ENCODE measurements at regions of chr3 and their contacts with region 1.

Region 1: DNA sequence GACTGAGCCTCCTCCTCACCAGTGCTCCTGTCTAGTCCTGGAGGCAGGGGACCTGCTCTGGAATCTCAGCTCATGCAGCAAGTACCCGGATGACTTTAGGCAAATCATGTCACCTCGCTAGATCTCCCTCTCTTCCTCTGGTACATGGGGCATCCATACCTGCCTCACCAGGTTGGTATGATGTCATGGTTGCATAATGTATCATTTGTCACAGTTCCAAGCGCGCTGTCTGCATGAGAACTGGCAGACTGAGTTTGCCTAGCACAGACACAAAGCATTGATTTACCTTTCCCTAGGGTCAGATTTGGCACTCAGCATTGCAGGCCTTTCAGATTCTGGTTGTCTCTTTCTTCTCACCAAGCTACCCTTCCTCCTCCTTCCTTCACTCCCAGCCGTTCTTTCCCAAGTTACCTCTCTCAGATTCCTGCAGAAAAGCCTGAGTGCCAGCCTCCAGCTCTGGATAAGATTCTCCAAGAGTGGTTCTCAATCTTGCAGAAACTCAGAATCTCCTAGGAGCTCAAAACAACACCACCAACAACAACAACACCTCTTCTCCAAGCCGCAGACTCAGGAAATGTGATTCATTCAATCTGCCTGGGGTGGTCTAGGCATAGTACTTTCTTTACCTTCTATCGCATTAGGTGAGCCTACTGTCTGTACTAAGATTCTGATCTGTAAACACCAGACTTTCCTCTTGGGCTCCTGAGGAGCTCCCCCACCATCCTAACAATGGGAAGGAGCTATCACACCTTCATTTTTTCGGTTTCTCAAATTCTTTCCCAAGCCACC is 29.5 kb downstream of the FAM43A start:
- DNase-seq: no peak
- H3K4me3 ChIP-seq: no peak overlapping the region
- H3K4me3 Mint-ChIP-seq: no peak overlapping the region
- H3K27ac ChIP-seq: no peak overlapping the region
- H3K27ac Mint-ChIP-seq: peak overlapping the region in 2 of 7 donors; percentile 1 to 70
- H3K4me1 ChIP-seq: no peaks in the 10 kb centered on the region
- H3K4me1 Mint-ChIP-seq: peaks cover 2% of the 10 kb centered on the region
- H3K27me3 ChIP-seq: no peaks in the 10 kb centered on the region
- H3K27me3 Mint-ChIP-seq: peaks cover 0 to 6% (median 0%) of the 10 kb centered on the region in 3 donors
- CTCF ChIP-seq: no peak

Region 2: GRCh38 chr3:194604834-194605233 is 110.4 kb before region 1 on chr3:
- intact Hi-C with region 1: no loop called
- DNase-seq: no peak
- H3K4me3 ChIP-seq: no peak overlapping the region
- H3K4me3 Mint-ChIP-seq: no peak overlapping the region
- H3K27ac ChIP-seq: no peak overlapping the region
- H3K27ac Mint-ChIP-seq: no peak overlapping the region
- H3K4me1 ChIP-seq: no peaks in the 10 kb centered on the region
- H3K4me1 Mint-ChIP-seq: no peaks in the 10 kb centered on the region
- H3K27me3 ChIP-seq: no peaks in the 10 kb centered on the region
- H3K27me3 Mint-ChIP-seq: no peaks in the 10 kb centered on the region
- CTCF ChIP-seq: no peak

Region 3: GRCh38 chr3:194749631-194750490 is 34.7 kb after region 1 on chr3:
- intact Hi-C with region 1: no loop called
- DNase-seq: no peak
- H3K4me3 ChIP-seq: no peak overlapping the region
- H3K4me3 Mint-ChIP-seq: no peak overlapping the region
- H3K27ac ChIP-seq: no peak overlapping the region
- H3K27ac Mint-ChIP-seq: no peak overlapping the region
- H3K4me1 ChIP-seq: peaks cover 12 to 18% of the 10 kb centered on the region in 2 donors
- H3K4me1 Mint-ChIP-seq: peaks cover 15% of the 10 kb centered on the region
- H3K27me3 ChIP-seq: no peaks in the 10 kb centered on the region
- H3K27me3 Mint-ChIP-seq: peaks cover 0 to 6% (median 4%) of the 10 kb centered on the region in 3 donors
- CTCF ChIP-seq: no peak

Region 4: DNA sequence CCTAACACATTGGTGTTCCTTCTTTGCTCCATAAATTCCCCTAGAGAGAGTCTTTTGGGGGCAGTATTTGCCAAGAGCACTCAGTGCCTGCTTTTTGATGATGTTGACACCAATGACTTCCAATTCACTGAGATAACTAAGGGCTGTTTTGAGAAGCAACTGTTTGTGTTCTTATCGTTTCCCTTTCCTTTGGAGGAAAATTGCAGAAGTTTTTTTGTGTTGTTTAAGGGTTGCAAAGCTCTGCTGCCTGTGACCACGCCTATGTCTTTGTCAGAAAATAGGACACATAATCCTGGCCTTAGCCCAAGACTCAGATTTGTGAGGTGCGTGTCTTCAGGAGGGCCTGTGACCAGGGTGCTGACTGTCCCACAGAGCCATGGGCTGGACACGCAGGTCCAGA is 70.1 kb after region 1 on chr3:
- intact Hi-C with region 1: loop called in 1 of 2 experiments (anchors 5 kb)
- DNase-seq: peak; percentile 14 to 25 (median 20)
- H3K4me3 ChIP-seq: no peak overlapping the region
- H3K4me3 Mint-ChIP-seq: no peak overlapping the region
- H3K27ac ChIP-seq: peak overlapping the region in 1 of 2 donors; percentile 76
- H3K27ac Mint-ChIP-seq: peak overlapping the region in 6 of 7 donors; percentile 18 to 73 (median 60)
- H3K4me1 ChIP-seq: peaks cover 16 to 17% of the 10 kb centered on the region in 2 donors
- H3K4me1 Mint-ChIP-seq: peaks cover 21% of the 10 kb centered on the region
- H3K27me3 ChIP-seq: no peaks in the 10 kb centered on the region
- H3K27me3 Mint-ChIP-seq: peaks cover 0 to 6% (median 2%) of the 10 kb centered on the region in 3 donors
- CTCF ChIP-seq: no peak

Measured in CD14-positive monocyte (primary cell).